ENCODE measurements at regions of chr2 and their contacts with region 1.

Region 1: GRCh38 chr2:70994756-70995729 is at the start of gene TEX261:
- DNase-seq: peak; percentile 82 to 94 (median 89)
- ATAC-seq: peak; percentile 95
- H3K4me3 ChIP-seq: peak within 1 kb of the TSS; percentile 82 to 95
- H3K4me3 Mint-ChIP-seq: peak within 1 kb of the TSS; percentile 97
- H3K27ac ChIP-seq: peak within 1 kb of the TSS; percentile 69 to 74
- H3K27ac Mint-ChIP-seq: peak within 1 kb of the TSS; percentile 96
- H3K4me1 ChIP-seq: peaks cover 21% of the 10 kb centered on the region
- H3K4me1 Mint-ChIP-seq: peaks cover 34% of the 10 kb centered on the region
- H3K27me3 ChIP-seq: no peaks in the 10 kb centered on the region
- H3K27me3 Mint-ChIP-seq: no peaks in the 10 kb centered on the region
- CTCF ChIP-seq: peak; percentile 49
- total RNA-seq, gene TEX261: 23.1 to 28.1 TPM

Region 2: GRCh38 chr2:69893684-69894551 is 1101.1 kb before region 1 on chr2 and contains the start of gene SNRNP27:
- CTCF ChIA-PET with region 1: no interaction called
- POLR2A ChIA-PET with region 1: no interaction called
- intact Hi-C with region 1: loop called in 1 of 2 experiments (anchors 10 kb)
- DNase-seq: peak; percentile 71 to 89 (median 83)
- ATAC-seq: peak; percentile 92
- H3K4me3 ChIP-seq: peak within 1 kb of the TSS; percentile 85 to 88
- H3K4me3 Mint-ChIP-seq: peak within 1 kb of the TSS; percentile 99
- H3K27ac ChIP-seq: peak within 1 kb of the TSS; percentile 82 to 86
- H3K27ac Mint-ChIP-seq: peak within 1 kb of the TSS; percentile 99
- H3K4me1 ChIP-seq: peaks cover 13% of the 10 kb centered on the region
- H3K4me1 Mint-ChIP-seq: peaks cover 46% of the 10 kb centered on the region
- H3K27me3 ChIP-seq: no peaks in the 10 kb centered on the region
- H3K27me3 Mint-ChIP-seq: no peaks in the 10 kb centered on the region
- CTCF ChIP-seq: no peak
- total RNA-seq, gene SNRNP27: 47.9 to 58.5 TPM

Region 3: DNA sequence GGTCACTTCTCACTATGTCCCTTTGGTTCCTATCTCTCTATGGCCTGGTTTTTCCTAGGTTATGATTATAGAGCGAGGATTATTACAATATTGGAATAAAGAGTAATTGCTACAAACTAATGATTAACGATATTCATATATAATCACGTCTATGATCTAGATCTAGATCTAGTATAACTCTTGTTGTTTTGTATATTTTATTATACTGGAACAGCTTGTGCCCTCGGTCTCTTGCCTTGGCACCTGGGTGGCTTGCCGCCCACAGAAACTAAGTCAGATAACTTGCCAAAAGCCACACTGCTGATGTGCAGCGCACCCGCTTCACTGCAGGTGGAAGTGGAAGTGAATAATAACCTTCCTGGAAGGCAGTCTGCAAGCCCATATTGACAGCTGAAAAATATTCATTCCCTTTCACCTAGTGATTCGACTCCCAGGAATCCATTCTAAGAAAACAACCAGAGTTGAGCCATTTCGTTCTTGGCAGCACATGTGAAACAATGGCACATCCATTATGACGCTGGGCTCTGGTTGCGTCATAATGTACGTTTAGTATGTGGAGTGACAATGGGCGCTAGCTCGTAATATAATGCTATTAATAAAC is 17.3 kb before region 1 on chr2:
- CTCF ChIA-PET with region 1: interaction called, 5 read pairs
- POLR2A ChIA-PET with region 1: interaction called, 3 read pairs
- intact Hi-C with region 1: loop called in 1 of 2 experiments (anchors 2 kb)
- DNase-seq: peak in 2 of 9 experiments; percentile 49 to 55
- ATAC-seq: peak; percentile 27
- H3K4me3 ChIP-seq: peak overlapping the region; percentile 59 to 61
- H3K4me3 Mint-ChIP-seq: peak overlapping the region; percentile 85
- H3K27ac ChIP-seq: peak overlapping the region; percentile 44 to 73
- H3K27ac Mint-ChIP-seq: peak overlapping the region; percentile 89
- H3K4me1 ChIP-seq: peaks cover 17% of the 10 kb centered on the region
- H3K4me1 Mint-ChIP-seq: peaks cover 20% of the 10 kb centered on the region
- H3K27me3 ChIP-seq: no peaks in the 10 kb centered on the region
- H3K27me3 Mint-ChIP-seq: no peaks in the 10 kb centered on the region
- CTCF ChIP-seq: peak; percentile 4

Region 4: GRCh38 chr2:71068218-71069035 is 73.4 kb after region 1 on chr2 and contains the start of gene NAGK:
- CTCF ChIA-PET with region 1: no interaction called
- POLR2A ChIA-PET with region 1: interaction called, 6 read pairs
- intact Hi-C with region 1: loop called (anchors 1 to 5 kb)
- DNase-seq: peak; percentile 95 to 99 (median 98)
- ATAC-seq: peak; percentile 82
- H3K4me3 ChIP-seq: peak within 1 kb of the TSS; percentile 77 to 87
- H3K4me3 Mint-ChIP-seq: peak within 1 kb of the TSS; percentile 95
- H3K27ac ChIP-seq: peak within 1 kb of the TSS; percentile 86 to 99
- H3K27ac Mint-ChIP-seq: peak within 1 kb of the TSS; percentile 99
- H3K4me1 ChIP-seq: peaks cover 43% of the 10 kb centered on the region
- H3K4me1 Mint-ChIP-seq: peaks cover 63% of the 10 kb centered on the region
- H3K27me3 ChIP-seq: no peaks in the 10 kb centered on the region
- H3K27me3 Mint-ChIP-seq: no peaks in the 10 kb centered on the region
- CTCF ChIP-seq: no peak
- total RNA-seq, gene NAGK: 58.9 to 67.7 TPM

Region 5: GRCh38 chr2:71331581-71332434 is 336.8 kb after region 1 on chr2 and contains the start of gene ZNF638:
- CTCF ChIA-PET with region 1: no interaction called
- POLR2A ChIA-PET with region 1: no interaction called
- intact Hi-C with region 1: loop called in 1 of 2 experiments (anchors 2 kb)
- DNase-seq: peak; percentile 83 to 98 (median 92)
- ATAC-seq: peak; percentile 97
- H3K4me3 ChIP-seq: peak within 1 kb of the TSS; percentile 74 to 98
- H3K4me3 Mint-ChIP-seq: peak within 1 kb of the TSS; percentile 99
- H3K27ac ChIP-seq: peak within 1 kb of the TSS; percentile 95 to 98
- H3K27ac Mint-ChIP-seq: peak within 1 kb of the TSS; percentile 100
- H3K4me1 ChIP-seq: peaks cover 40% of the 10 kb centered on the region
- H3K4me1 Mint-ChIP-seq: peaks cover 42% of the 10 kb centered on the region
- H3K27me3 ChIP-seq: no peaks in the 10 kb centered on the region
- H3K27me3 Mint-ChIP-seq: peaks cover 5% of the 10 kb centered on the region
- CTCF ChIP-seq: peak; percentile 66
- total RNA-seq, gene ZNF638: 61.9 to 71.1 TPM

Region 6: GRCh38 chr2:72561621-72562318 is 1566.7 kb after region 1 on chr2:
- CTCF ChIA-PET with region 1: no interaction called
- POLR2A ChIA-PET with region 1: no interaction called
- intact Hi-C with region 1: no loop called
- DNase-seq: no peak
- ATAC-seq: no peak
- H3K4me3 ChIP-seq: no peak overlapping the region
- H3K4me3 Mint-ChIP-seq: no peak overlapping the region
- H3K27ac ChIP-seq: no peak overlapping the region
- H3K27ac Mint-ChIP-seq: no peak overlapping the region
- H3K4me1 ChIP-seq: no peaks in the 10 kb centered on the region
- H3K4me1 Mint-ChIP-seq: peaks cover 4% of the 10 kb centered on the region
- H3K27me3 ChIP-seq: no peaks in the 10 kb centered on the region
- H3K27me3 Mint-ChIP-seq: no peaks in the 10 kb centered on the region
- CTCF ChIP-seq: no peak

Measured in CD8-positive, alpha-beta T cell (primary cell).